CD8-positive, alpha-beta T cell (primary cell): ENCODE measurements at regions of chr11 and their contacts with region 1.

Region 1: GRCh38 chr11:65588199-65589054 is 7.2 kb downstream of the KCNK7 start:
- DNase-seq: peak; percentile 55 to 88 (median 77)
- ATAC-seq: peak; percentile 95
- H3K4me3 ChIP-seq: no peak overlapping the region
- H3K4me3 Mint-ChIP-seq: no peak overlapping the region
- H3K27ac ChIP-seq: peak overlapping the region in 1 of 2 experiments; percentile 61
- H3K27ac Mint-ChIP-seq: peak overlapping the region; percentile 80
- H3K4me1 ChIP-seq: peaks cover 13% of the 10 kb centered on the region
- H3K4me1 Mint-ChIP-seq: peaks cover 21% of the 10 kb centered on the region
- H3K27me3 ChIP-seq: no peaks in the 10 kb centered on the region
- H3K27me3 Mint-ChIP-seq: no peaks in the 10 kb centered on the region
- CTCF ChIP-seq: peak; percentile 77

Region 2: GRCh38 chr11:65366340-65366773 is 222.1 kb before region 1 on chr11:
- CTCF ChIA-PET with region 1: interaction called, 8 read pairs
- POLR2A ChIA-PET with region 1: no interaction called
- intact Hi-C with region 1: loop called (anchors 1 to 2 kb)
- DNase-seq: peak in 3 of 9 experiments; percentile 31 to 80 (median 70)
- ATAC-seq: peak; percentile 92
- H3K4me3 ChIP-seq: no peak overlapping the region
- H3K4me3 Mint-ChIP-seq: no peak overlapping the region
- H3K27ac ChIP-seq: no peak overlapping the region
- H3K27ac Mint-ChIP-seq: no peak overlapping the region
- H3K4me1 ChIP-seq: peaks cover 6% of the 10 kb centered on the region
- H3K4me1 Mint-ChIP-seq: peaks cover 5% of the 10 kb centered on the region
- H3K27me3 ChIP-seq: no peaks in the 10 kb centered on the region
- H3K27me3 Mint-ChIP-seq: no peaks in the 10 kb centered on the region
- CTCF ChIP-seq: peak; percentile 81

Region 3: DNA sequence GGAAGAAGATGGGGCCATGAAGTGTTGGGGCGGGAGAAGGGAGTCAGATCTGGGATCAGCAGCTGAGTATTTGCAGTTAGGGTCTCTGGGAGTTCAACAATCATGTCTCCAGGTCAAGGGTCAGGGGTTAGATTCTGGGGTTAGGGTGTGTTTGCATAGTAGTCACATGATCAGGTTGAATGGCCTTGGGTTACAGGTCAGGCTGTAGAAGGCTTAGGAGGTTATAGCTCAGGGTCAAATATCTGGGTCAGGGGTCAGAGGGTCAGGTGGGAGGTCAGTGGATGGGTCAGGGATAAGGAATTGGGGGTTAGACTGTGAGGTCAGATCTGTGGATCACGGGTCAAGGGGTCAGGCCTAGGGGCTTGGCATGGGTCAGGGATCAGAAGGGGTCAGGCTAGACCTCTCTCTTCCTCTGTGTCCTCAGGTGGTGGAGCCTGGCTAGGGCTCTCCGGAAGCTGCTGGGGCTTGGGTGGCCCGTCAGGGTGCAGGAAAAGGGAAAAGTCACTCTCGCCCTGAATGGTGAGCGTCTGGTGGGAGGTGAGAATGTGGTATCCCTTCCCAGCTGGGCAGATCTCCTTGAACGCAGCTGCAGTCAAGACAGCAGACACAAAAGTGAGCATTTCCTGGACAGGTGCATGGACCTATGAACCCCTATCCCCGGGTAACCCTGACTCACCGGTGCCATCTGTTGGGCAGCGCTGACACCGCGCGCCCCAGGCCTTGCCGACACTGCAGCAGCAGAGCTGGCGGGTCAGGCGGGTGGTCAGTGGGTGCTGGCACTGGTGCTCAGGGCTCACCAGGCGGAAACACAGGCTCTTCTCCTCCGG is 36.6 kb before region 1 on chr11:
- CTCF ChIA-PET with region 1: interaction called, 13 read pairs
- POLR2A ChIA-PET with region 1: no interaction called
- intact Hi-C with region 1: no loop called
- DNase-seq: peak in 7 of 9 experiments; percentile 51 to 80 (median 71)
- ATAC-seq: peak; percentile 26
- H3K4me3 ChIP-seq: no peak overlapping the region
- H3K4me3 Mint-ChIP-seq: peak overlapping the region; percentile 17
- H3K27ac ChIP-seq: no peak overlapping the region
- H3K27ac Mint-ChIP-seq: peak overlapping the region; percentile 69
- H3K4me1 ChIP-seq: peaks cover 78% of the 10 kb centered on the region
- H3K4me1 Mint-ChIP-seq: peaks cover 75% of the 10 kb centered on the region
- H3K27me3 ChIP-seq: no peaks in the 10 kb centered on the region
- H3K27me3 Mint-ChIP-seq: no peaks in the 10 kb centered on the region
- CTCF ChIP-seq: peak; percentile 53

Region 4: DNA sequence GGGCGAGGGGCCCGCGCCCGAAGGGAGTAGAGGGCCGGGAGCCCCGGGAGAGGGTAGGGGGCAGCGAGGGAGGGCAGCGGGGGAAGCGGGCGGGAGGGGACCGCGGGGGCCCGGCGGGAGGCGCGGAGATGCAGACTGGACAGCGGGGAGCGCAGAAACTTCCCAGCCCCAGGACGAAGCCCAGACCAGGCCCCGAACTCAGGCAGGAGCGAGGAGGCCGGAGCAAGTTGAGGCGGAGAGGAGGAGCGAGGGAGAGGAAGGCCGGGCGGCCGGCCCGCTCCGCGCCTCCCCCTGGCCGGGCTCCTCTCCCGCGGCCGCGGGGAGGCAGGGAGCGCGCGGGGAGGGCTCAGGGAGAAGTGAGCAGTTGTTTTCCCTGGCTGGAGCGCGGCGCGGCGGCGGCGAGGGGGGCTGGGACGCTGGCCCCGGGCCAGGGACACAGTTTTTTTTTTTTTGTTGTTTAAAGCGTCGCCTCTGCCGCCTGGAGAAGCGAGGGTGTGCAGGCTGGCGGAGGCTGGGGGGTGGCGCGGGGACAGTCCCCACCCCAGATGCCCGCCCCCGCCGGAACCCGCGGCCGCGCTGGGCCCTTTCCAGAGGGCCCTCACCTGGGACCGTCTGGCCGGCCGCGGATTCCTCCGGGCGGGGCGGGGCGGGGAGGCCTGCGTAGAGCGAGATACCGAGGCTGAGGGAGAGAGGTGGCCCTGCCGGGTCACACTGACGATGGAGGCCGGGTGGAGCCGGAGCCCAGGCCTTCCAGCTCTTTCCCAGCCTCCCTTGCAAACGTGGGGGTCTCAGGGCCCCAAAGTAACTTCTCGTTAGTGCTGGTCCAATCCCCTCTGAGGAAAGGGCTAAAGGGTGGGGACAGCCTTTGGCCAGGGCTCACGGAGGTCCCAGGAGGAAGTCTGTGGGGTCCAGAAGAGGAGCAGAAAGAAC is 30.2 kb before region 1 on chr11 and contains the start of gene LTBP3:
- CTCF ChIA-PET with region 1: interaction called, 13 read pairs
- POLR2A ChIA-PET with region 1: no interaction called
- intact Hi-C with region 1: no loop called
- DNase-seq: peak in 5 of 9 experiments; percentile 29 to 70 (median 66)
- ATAC-seq: peak; percentile 38
- H3K4me3 ChIP-seq: peak within 1 kb of the TSS; percentile 54 to 61
- H3K4me3 Mint-ChIP-seq: peak within 1 kb of the TSS; percentile 89
- H3K27ac ChIP-seq: peak within 1 kb of the TSS; percentile 60 to 79
- H3K27ac Mint-ChIP-seq: peak within 1 kb of the TSS; percentile 89
- H3K4me1 ChIP-seq: peaks cover 61% of the 10 kb centered on the region
- H3K4me1 Mint-ChIP-seq: peaks cover 56% of the 10 kb centered on the region
- H3K27me3 ChIP-seq: no peaks in the 10 kb centered on the region
- H3K27me3 Mint-ChIP-seq: no peaks in the 10 kb centered on the region
- CTCF ChIP-seq: no peak
- total RNA-seq, gene LTBP3: 231 to 246 TPM

Region 5: DNA sequence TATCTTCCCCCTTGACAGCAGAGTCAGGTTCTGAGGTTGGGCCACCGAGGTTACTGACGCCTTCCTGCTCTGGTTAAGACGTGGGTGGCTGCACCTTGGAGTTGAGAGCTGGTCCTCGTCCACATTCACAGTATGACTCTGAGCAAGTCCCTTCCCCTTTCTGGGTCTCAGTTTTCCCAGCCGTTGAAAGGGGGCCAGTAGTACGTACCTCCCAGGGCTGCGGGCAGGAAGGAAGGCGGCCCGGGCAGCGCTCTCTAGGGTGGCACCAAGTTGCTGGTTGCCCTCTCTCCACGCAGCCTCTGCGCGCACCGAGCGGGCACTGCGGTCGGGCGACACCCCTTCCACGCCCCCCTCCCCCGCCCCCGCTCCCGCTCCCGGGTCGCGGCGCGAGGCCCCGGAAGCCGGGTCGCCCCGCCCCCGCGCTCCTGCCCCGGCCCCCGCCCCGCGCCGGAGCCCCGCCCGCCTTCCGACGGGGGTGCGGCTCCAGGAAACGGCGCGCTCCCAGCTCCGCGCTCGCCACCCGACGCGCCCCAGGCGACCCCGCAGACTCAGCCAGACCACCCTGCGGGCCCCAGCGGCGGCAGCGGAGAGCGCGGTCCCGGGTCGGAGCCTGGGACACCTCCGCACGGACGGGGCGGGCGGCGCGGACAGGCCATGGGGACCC is 12.7 kb before region 1 on chr11 and contains the start of gene EHBP1L1:
- CTCF ChIA-PET with region 1: interaction called, 43 read pairs
- POLR2A ChIA-PET with region 1: interaction called, 30 read pairs
- intact Hi-C with region 1: loop called (anchors 1 kb)
- DNase-seq: peak; percentile 45 to 88 (median 75)
- ATAC-seq: peak; percentile 32
- H3K4me3 ChIP-seq: peak within 1 kb of the TSS; percentile 71 to 78
- H3K4me3 Mint-ChIP-seq: peak within 1 kb of the TSS; percentile 93
- H3K27ac ChIP-seq: peak within 1 kb of the TSS; percentile 49 to 89
- H3K27ac Mint-ChIP-seq: peak within 1 kb of the TSS; percentile 96
- H3K4me1 ChIP-seq: peaks cover 54% of the 10 kb centered on the region
- H3K4me1 Mint-ChIP-seq: peaks cover 55% of the 10 kb centered on the region
- H3K27me3 ChIP-seq: no peaks in the 10 kb centered on the region
- H3K27me3 Mint-ChIP-seq: no peaks in the 10 kb centered on the region
- CTCF ChIP-seq: no peak
- total RNA-seq, gene EHBP1L1: 64.7 to 65.1 TPM

Region 6: GRCh38 chr11:65606876-65607613 is 18.6 kb after region 1 on chr11:
- CTCF ChIA-PET with region 1: interaction called, 34 read pairs
- POLR2A ChIA-PET with region 1: no interaction called
- intact Hi-C with region 1: no loop called
- DNase-seq: peak in 2 of 9 experiments; percentile 46
- ATAC-seq: peak; percentile 40
- H3K4me3 ChIP-seq: no peak overlapping the region
- H3K4me3 Mint-ChIP-seq: no peak overlapping the region
- H3K27ac ChIP-seq: no peak overlapping the region
- H3K27ac Mint-ChIP-seq: no peak overlapping the region
- H3K4me1 ChIP-seq: peaks cover 23% of the 10 kb centered on the region
- H3K4me1 Mint-ChIP-seq: peaks cover 29% of the 10 kb centered on the region
- H3K27me3 ChIP-seq: no peaks in the 10 kb centered on the region
- H3K27me3 Mint-ChIP-seq: no peaks in the 10 kb centered on the region
- CTCF ChIP-seq: no peak

Region 7: GRCh38 chr11:65844231-65845190 is 256.1 kb after region 1 on chr11:
- CTCF ChIA-PET with region 1: no interaction called
- POLR2A ChIA-PET with region 1: no interaction called
- intact Hi-C with region 1: no loop called
- DNase-seq: no peak
- ATAC-seq: no peak
- H3K4me3 ChIP-seq: no peak overlapping the region
- H3K4me3 Mint-ChIP-seq: no peak overlapping the region
- H3K27ac ChIP-seq: no peak overlapping the region
- H3K27ac Mint-ChIP-seq: no peak overlapping the region
- H3K4me1 ChIP-seq: no peaks in the 10 kb centered on the region
- H3K4me1 Mint-ChIP-seq: no peaks in the 10 kb centered on the region
- H3K27me3 ChIP-seq: no peaks in the 10 kb centered on the region
- H3K27me3 Mint-ChIP-seq: no peaks in the 10 kb centered on the region
- CTCF ChIP-seq: no peak

Region 8: GRCh38 chr11:66744485-66745340 is 1156.3 kb after region 1 on chr11:
- CTCF ChIA-PET with region 1: no interaction called
- POLR2A ChIA-PET with region 1: no interaction called
- intact Hi-C with region 1: no loop called
- DNase-seq: peak; percentile 76 to 93 (median 87)
- ATAC-seq: peak; percentile 87
- H3K4me3 ChIP-seq: peak overlapping the region; percentile 81 to 92
- H3K4me3 Mint-ChIP-seq: peak overlapping the region; percentile 90
- H3K27ac ChIP-seq: peak overlapping the region; percentile 49 to 71
- H3K27ac Mint-ChIP-seq: peak overlapping the region; percentile 75
- H3K4me1 ChIP-seq: peaks cover 5% of the 10 kb centered on the region
- H3K4me1 Mint-ChIP-seq: peaks cover 3% of the 10 kb centered on the region
- H3K27me3 ChIP-seq: no peaks in the 10 kb centered on the region
- H3K27me3 Mint-ChIP-seq: no peaks in the 10 kb centered on the region
- CTCF ChIP-seq: no peak